ENCODE measurements at regions of chr12 and their contacts with region 1.

Region 1: DNA sequence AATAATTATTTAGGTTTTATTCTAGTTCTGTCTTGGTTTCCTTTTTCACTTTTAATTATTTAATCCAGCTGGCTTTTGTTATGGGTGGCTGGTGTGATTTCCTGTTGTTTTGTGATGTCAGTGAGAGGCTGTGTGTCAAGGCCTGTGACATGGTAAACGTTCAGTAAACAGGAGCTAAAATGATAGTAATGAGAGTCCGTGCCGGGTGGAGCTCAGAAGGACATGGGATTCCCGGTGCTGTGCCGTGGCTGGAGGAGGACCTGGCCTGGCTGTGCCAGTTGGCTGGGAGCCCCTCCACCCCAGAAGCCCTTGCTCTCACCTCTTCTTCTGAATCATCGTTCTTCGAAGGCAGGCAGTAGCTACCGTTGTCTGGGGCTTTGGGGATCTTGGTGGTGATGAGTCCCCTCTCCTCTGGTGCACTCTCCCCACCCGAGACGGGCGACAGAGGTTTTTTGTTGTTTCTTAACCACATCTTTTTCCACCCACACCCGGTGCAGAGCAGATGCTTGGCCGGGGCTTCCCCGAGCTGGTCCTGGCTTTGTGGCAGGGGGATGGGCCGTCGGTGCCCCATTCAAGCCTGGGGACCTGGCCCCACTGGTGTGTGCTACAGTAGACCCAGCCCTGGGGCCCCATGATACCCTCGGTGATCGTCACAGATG is 29.1 kb downstream of the SH2B3 start:
- DNase-seq: no peak
- H3K4me3 ChIP-seq: peak overlapping the region; percentile 29
- CTCF ChIP-seq: no peak

Region 2: GRCh38 chr12:110426406-110426805 is 1008.4 kb before region 1 on chr12:
- CTCF ChIA-PET with region 1: no interaction called
- POLR2A ChIA-PET with region 1: no interaction called
- DNase-seq: no peak
- H3K4me3 ChIP-seq: no peak overlapping the region
- CTCF ChIP-seq: no peak

Region 3: DNA sequence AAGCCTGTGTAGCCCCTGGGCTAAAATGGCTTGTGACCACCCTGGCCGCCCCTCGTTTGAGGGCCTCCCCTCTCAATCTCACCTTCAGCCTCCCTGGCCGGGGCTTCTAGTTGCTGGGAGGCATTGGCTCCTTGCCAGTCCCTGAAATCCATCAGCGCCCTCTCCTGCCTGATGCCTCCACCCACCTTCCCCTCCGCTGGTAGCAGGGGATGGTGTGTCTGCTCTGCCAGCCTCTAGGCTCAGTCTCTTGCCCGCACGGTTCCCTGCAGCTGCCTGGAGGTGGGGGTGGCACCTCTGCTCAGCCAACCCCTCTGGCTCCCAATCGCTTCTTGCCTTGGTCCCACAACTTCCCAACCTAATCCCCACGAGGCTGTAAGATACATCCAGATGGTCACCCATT is 233.8 kb before region 1 on chr12:
- CTCF ChIA-PET with region 1: no interaction called
- POLR2A ChIA-PET with region 1: no interaction called
- DNase-seq: no peak
- H3K4me3 ChIP-seq: no peak overlapping the region
- CTCF ChIP-seq: no peak

Region 4: GRCh38 chr12:111444925-111445725 is 10.3 kb after region 1 on chr12:
- CTCF ChIA-PET with region 1: interaction called, 158 read pairs
- POLR2A ChIA-PET with region 1: no interaction called
- DNase-seq: no peak
- H3K4me3 ChIP-seq: no peak overlapping the region
- CTCF ChIP-seq: no peak